Naive thymus-derived CD4-positive, alpha-beta T cell (primary cell): ENCODE measurements at regions of chr1 and their contacts with region 1.

Region 1: GRCh38 chr1:151720974-151721787 is at the start of gene RIIAD1:
- DNase-seq: peak in 8 of 9 donors; percentile 17 to 47 (median 40)
- ATAC-seq: peak; percentile 85
- H3K4me3 ChIP-seq: peak within 1 kb of the TSS; percentile 71
- H3K4me3 Mint-ChIP-seq: peak within 1 kb of the TSS; percentile 71 to 85 (median 83)
- H3K27ac ChIP-seq: no peak within 1 kb of the TSS
- H3K27ac Mint-ChIP-seq: peak within 1 kb of the TSS in 8 of 9 donors; percentile 11 to 85 (median 36)
- H3K4me1 ChIP-seq: peaks cover 9 to 14% of the 10 kb centered on the region in 2 donors
- H3K4me1 Mint-ChIP-seq: peaks cover 17 to 41% (median 26%) of the 10 kb centered on the region in 7 donors
- H3K27me3 ChIP-seq: peaks cover 4 to 6% of the 10 kb centered on the region in 2 donors
- H3K27me3 Mint-ChIP-seq: peaks cover 54 to 88% (median 65%) of the 10 kb centered on the region in 5 donors
- total RNA-seq, gene RIIAD1: not detected

Region 2: DNA sequence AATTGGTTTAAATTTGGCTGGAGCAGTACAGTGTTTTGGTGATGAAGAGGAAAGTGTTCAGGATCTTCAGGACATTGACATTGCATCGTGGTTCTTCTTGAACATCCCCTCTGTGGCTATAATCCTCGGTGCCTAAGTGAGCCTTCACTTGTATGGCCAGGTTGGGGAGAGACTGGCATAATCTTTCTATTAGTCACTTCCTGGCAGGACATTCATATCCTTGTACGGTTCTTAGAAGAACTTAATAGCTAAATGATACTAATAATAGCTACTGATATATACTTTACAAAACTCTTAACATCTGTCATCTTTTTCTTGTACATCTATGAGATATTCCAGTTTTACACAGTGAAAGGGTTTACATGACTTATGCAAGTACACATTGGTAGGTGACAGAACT is 40.4 kb before region 1 on chr1:
- CTCF ChIA-PET with region 1: no interaction called
- POLR2A ChIA-PET with region 1: no interaction called
- intact Hi-C with region 1: no loop called
- DNase-seq: no peak
- ATAC-seq: no peak
- H3K4me3 ChIP-seq: no peak overlapping the region
- H3K4me3 Mint-ChIP-seq: no peak overlapping the region
- H3K27ac ChIP-seq: no peak overlapping the region
- H3K27ac Mint-ChIP-seq: no peak overlapping the region
- H3K4me1 ChIP-seq: no peaks in the 10 kb centered on the region
- H3K4me1 Mint-ChIP-seq: peaks cover 0 to 4% (median 0%) of the 10 kb centered on the region in 7 donors
- H3K27me3 ChIP-seq: no peaks in the 10 kb centered on the region
- H3K27me3 Mint-ChIP-seq: no peaks in the 10 kb centered on the region

Region 3: DNA sequence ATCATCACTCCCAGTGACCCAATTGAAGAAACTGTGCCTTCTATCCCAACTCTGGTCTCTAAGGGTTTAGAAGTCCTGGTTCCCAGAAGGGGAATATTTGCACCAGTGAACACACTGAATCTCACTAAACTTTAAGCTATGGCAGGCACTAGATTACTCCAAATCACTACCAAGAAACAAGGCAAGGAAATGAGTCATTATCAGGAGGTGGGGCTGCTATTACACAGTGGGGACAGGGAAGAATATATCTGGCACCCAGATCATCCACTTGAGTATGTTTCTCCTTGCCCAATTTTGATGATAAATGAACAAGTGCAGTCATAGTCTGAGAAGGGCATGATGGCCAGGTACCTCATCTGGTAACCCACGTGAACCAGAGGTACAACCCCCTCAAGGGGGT is 35.1 kb after region 1 on chr1:
- CTCF ChIA-PET with region 1: no interaction called
- POLR2A ChIA-PET with region 1: no interaction called
- intact Hi-C with region 1: loop called (anchors 5 kb)
- DNase-seq: no peak
- ATAC-seq: peak; percentile 22
- H3K4me3 ChIP-seq: no peak overlapping the region
- H3K4me3 Mint-ChIP-seq: no peak overlapping the region
- H3K27ac ChIP-seq: no peak overlapping the region
- H3K27ac Mint-ChIP-seq: no peak overlapping the region
- H3K4me1 ChIP-seq: no peaks in the 10 kb centered on the region
- H3K4me1 Mint-ChIP-seq: peaks cover 0 to 10% (median 0%) of the 10 kb centered on the region in 7 donors
- H3K27me3 ChIP-seq: no peaks in the 10 kb centered on the region
- H3K27me3 Mint-ChIP-seq: peaks cover 0 to 9% (median 0%) of the 10 kb centered on the region in 5 donors

Region 4: DNA sequence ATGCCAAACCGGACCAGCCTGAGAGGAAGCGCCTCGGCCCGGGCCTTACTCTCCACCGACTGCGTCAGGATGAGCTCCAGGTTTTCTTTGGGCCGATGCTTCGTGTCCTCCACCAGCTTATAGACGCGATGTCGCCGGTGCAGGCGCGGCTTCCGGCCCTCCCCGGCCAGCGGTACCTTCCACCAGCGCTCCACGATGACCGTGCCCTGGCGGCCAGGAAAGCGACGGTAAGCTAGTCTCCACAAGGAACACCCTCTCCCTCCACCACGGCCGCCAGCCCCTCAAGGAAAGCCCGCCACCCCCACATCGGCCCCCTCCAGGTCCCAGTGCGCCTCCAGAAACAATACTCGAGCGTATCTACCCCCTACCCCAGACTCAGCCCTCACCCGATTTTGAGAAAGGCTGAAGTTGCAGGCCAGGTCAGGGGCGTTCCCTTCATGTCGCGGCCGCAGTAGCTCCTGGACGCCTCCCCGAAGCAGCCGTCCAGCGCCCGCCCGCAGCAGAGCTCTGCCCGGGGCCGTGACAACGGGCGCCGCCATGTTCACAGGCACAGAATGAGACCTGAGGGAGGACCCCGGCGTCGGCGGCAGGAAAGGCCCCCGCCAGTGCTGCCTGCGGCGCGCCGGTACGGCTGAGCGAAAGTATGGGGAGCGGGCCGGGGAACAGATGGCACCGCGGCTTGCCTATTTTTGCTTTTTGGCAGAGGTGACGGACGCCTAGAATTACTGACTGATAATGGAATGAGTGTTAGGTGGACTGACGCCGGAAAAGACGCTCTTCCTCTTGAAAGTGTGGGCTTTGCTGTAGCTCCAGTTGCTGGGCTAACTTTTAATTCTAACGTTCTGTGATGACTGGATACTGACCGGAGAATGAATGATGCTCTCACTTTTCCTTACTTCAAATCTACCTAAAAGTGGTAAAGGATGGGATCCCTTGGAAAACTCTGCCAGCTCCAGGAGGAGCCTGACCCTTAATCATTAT is 42.0 kb after region 1 on chr1 and contains the start of gene MRPL9:
- CTCF ChIA-PET with region 1: no interaction called
- POLR2A ChIA-PET with region 1: no interaction called
- intact Hi-C with region 1: loop called (anchors 5 kb)
- DNase-seq: peak; percentile 73 to 85 (median 82)
- ATAC-seq: peak; percentile 99
- H3K4me3 ChIP-seq: peak within 1 kb of the TSS; percentile 76
- H3K4me3 Mint-ChIP-seq: peak within 1 kb of the TSS; percentile 91 to 98 (median 95)
- H3K27ac ChIP-seq: peak within 1 kb of the TSS; percentile 81
- H3K27ac Mint-ChIP-seq: peak within 1 kb of the TSS; percentile 92 to 100 (median 97)
- H3K4me1 ChIP-seq: peaks cover 11 to 12% of the 10 kb centered on the region in 2 donors
- H3K4me1 Mint-ChIP-seq: peaks cover 13 to 28% (median 21%) of the 10 kb centered on the region in 7 donors
- H3K27me3 ChIP-seq: no peaks in the 10 kb centered on the region
- H3K27me3 Mint-ChIP-seq: no peaks in the 10 kb centered on the region
- total RNA-seq, gene MRPL9: 77.0 to 133 (median 81.5) TPM